ENCODE measurements at regions of chr9 and their contacts with region 1.

Region 1: GRCh38 chr9:70602321-70603019 is 188.0 kb upstream of the KLF9 start:
- DNase-seq: peak; percentile 60
- ATAC-seq: peak; percentile 78
- H3K4me3 Mint-ChIP-seq: no peak overlapping the region
- H3K27ac Mint-ChIP-seq: no peak overlapping the region
- H3K4me1 Mint-ChIP-seq: no peaks in the 10 kb centered on the region
- H3K27me3 Mint-ChIP-seq: no peaks in the 10 kb centered on the region

Region 2: DNA sequence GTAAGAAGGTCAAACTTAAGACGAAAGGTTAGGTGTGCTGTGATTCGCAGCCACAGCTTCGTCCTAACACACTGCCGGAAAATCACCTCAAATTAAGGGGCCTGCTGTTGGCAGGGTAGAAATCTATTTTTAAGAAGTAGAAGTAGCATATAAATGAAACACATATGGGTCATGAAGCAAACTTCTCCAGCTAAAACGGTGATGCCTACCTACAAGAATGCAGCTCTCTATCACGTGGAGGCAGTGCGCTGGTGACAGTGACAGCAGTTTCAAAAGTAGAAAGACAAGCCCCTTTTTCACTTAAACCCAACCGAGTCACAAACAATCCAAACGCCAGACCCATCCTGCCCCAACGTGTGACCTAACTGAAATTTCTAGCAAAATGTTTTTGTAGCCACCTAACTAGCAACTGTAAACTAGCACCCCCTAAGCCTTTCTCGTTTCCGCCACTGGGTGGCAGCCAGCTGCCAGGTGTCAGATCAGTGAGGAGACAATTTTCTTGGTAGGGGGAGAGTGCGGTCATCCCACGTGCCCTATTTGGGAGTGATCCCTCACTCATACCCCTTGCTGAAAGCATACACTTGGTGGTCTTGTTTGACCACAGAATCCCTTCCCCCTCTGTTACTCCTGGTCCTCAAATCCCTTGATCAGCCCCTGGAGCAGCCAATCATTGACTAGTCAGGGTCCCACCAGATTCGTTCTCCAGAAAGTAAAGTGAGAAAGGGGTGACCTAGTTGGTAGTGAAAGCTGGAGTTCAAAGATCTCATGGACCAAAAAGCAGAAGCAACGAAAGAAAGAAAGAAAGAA is 630.6 kb before region 1 on chr9:
- CTCF ChIA-PET with region 1: interaction called, 5 read pairs
- POLR2A ChIA-PET with region 1: no interaction called
- intact Hi-C with region 1: loop called in 1 of 2 experiments (anchors 1 kb)
- DNase-seq: peak; percentile 75
- ATAC-seq: peak; percentile 39
- H3K4me3 Mint-ChIP-seq: no peak overlapping the region
- H3K27ac Mint-ChIP-seq: no peak overlapping the region
- H3K4me1 Mint-ChIP-seq: no peaks in the 10 kb centered on the region
- H3K27me3 Mint-ChIP-seq: peaks cover 16% of the 10 kb centered on the region

Region 3: GRCh38 chr9:70258692-70259511 is 343.6 kb before region 1 on chr9 and contains the start of gene SMC5:
- CTCF ChIA-PET with region 1: interaction called, 8 read pairs
- POLR2A ChIA-PET with region 1: no interaction called
- intact Hi-C with region 1: loop called in 1 of 2 experiments (anchors 5 kb)
- DNase-seq: peak; percentile 92
- ATAC-seq: peak; percentile 83
- H3K4me3 Mint-ChIP-seq: peak within 1 kb of the TSS; percentile 89
- H3K27ac Mint-ChIP-seq: peak within 1 kb of the TSS; percentile 96
- H3K4me1 Mint-ChIP-seq: peaks cover 54% of the 10 kb centered on the region
- H3K27me3 Mint-ChIP-seq: no peaks in the 10 kb centered on the region
- total RNA-seq, gene SMC5: 39.0 to 43.0 TPM

Region 4: DNA sequence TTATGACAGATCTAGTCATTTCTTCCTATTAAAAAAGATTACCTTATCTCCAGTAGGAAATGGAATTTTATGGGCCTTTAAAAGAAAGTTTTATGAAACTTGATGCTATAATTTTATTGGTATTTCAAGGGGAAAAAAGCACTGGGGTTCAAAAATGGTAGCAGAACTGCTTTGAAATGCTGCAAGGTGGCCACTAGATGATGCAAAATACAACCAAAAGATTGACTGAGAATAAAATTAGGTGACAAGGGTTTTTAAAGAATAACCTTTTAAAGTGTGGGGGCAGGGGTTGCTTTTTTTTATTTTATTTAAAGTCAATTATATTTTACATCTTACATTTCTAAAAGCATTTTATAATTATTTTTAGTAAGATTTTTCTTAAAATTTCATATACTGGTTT is 249.7 kb before region 1 on chr9:
- CTCF ChIA-PET with region 1: interaction called, 15 read pairs
- POLR2A ChIA-PET with region 1: no interaction called
- intact Hi-C with region 1: loop called in 1 of 2 experiments (anchors 1 kb)
- DNase-seq: no peak
- ATAC-seq: no peak
- H3K4me3 Mint-ChIP-seq: no peak overlapping the region
- H3K27ac Mint-ChIP-seq: no peak overlapping the region
- H3K4me1 Mint-ChIP-seq: no peaks in the 10 kb centered on the region
- H3K27me3 Mint-ChIP-seq: no peaks in the 10 kb centered on the region

Region 5: DNA sequence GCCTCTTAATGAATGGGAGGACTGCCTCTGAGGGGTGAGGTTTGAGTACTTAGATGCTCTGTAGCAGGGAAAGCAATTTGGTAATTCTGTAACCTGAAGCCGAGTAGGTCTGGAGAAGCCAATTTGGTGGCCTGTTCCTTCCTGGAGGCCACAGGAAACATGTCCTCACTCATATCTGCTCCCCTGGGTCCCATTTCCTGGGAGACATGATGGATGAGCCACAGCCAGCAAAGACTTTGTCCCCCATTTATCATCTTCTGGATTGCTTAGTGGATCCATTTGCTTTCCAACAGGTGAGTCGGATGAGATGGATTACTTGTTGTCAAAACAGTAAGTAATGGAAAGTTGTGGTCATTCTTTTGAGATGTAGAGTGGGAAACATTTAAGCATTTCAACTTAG is 88.2 kb before region 1 on chr9:
- CTCF ChIA-PET with region 1: interaction called, 12 read pairs
- POLR2A ChIA-PET with region 1: no interaction called
- intact Hi-C with region 1: no loop called
- DNase-seq: no peak
- ATAC-seq: no peak
- H3K4me3 Mint-ChIP-seq: no peak overlapping the region
- H3K27ac Mint-ChIP-seq: no peak overlapping the region
- H3K4me1 Mint-ChIP-seq: peaks cover 3% of the 10 kb centered on the region
- H3K27me3 Mint-ChIP-seq: no peaks in the 10 kb centered on the region

Region 6: DNA sequence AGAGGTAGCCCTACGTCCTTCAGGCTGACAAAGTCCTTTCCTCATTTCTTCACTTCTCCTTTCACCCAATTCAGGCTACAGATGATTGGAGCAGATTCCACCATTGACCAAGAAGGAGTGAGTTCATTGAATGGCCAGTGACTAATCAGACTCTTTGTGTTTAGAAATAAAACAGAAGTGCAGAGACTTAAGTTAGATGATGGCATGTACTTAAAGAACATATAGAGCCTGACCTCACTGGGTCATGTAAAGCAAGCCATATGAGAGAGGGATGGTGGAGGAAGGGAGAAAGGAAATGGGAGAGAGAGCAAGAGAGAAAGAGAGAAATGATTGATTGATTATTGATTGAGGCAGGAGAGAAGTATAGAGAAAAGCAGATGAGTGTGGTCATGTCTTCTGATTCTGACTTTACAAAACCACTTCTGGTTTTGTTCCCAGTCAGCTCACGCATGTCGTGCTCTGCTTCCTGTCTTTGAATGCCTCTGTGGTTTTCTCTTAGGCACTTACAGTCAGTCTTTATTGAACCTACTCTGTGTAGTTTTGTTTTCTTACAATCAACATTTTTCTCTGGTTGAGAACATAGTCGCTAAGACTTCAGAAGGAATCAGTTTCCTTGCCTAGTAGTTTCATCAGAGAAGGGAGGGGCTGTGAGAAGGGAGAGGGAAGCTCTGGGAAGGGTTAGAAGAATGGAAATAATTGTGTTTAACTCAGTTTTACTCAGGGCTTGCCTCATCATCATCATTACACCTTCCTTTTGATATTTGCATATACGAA is 38.9 kb before region 1 on chr9:
- CTCF ChIA-PET with region 1: interaction called, 11 read pairs
- POLR2A ChIA-PET with region 1: interaction called, 3 read pairs
- intact Hi-C with region 1: loop called in 1 of 2 experiments (anchors 2 kb)
- DNase-seq: peak; percentile 72
- ATAC-seq: peak; percentile 93
- H3K4me3 Mint-ChIP-seq: peak overlapping the region; percentile 40
- H3K27ac Mint-ChIP-seq: peak overlapping the region; percentile 95
- H3K4me1 Mint-ChIP-seq: peaks cover 45% of the 10 kb centered on the region
- H3K27me3 Mint-ChIP-seq: no peaks in the 10 kb centered on the region

Measured in activated CD4-positive, alpha-beta T cell treated with anti-CD3 and anti-CD28 coated beads for 36 hours (primary cell).